ENCODE measurements at regions of chr2 and their contacts with region 1.

Region 1: DNA sequence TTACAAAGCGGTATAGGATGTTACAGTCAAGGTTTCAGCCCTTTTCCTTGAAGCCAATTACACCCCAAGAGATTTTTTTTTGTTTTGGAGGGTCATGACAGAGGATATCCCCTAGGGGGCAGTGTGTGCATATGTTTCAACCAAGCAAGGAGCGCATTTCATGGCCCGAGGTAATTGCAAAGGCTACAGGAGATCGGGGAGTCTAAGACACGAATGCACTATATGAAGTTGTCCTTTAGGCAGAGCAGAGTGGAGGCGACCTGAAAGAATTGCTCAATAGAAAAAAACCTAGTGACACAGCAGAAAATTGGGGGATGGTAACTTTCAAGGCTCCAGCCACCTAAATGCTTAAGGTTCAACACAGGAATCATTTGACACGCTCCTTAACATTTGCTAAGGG is 219.8 kb upstream of the PARD3B start:
- DNase-seq: peak; percentile 74
- H3K4me3 Mint-ChIP-seq: no peak overlapping the region
- H3K27ac Mint-ChIP-seq: no peak overlapping the region
- H3K4me1 Mint-ChIP-seq: no peaks in the 10 kb centered on the region
- H3K27me3 Mint-ChIP-seq: no peaks in the 10 kb centered on the region

Region 2: DNA sequence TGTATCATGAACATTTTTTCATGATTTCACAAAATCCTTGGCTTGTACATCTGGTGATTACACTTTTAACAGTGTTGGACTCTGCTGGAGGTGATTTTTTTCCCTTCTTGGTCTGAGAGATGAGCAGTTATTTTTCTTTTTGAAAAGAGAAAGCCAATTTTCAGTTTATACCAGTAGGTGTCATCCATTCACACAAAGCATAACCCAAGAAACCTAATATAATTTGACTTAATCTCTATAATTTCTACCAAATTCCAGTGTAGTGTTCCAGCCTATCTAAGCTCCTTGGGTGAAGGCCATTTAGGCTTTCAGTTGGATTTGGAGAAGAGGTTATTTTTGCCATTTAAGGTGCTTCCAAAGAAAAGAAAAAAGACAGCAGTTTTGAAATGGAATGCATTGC is 396.6 kb before region 1 on chr2:
- CTCF ChIA-PET with region 1: no interaction called
- intact Hi-C with region 1: loop called (anchors 5 kb)
- DNase-seq: no peak
- H3K4me3 Mint-ChIP-seq: no peak overlapping the region
- H3K27ac Mint-ChIP-seq: no peak overlapping the region
- H3K4me1 Mint-ChIP-seq: peaks cover 43% of the 10 kb centered on the region
- H3K27me3 Mint-ChIP-seq: no peaks in the 10 kb centered on the region

Region 3: GRCh38 chr2:204018717-204019116 is 306.8 kb before region 1 on chr2:
- CTCF ChIA-PET with region 1: no interaction called
- intact Hi-C with region 1: no loop called
- DNase-seq: no peak
- H3K4me3 Mint-ChIP-seq: no peak overlapping the region
- H3K27ac Mint-ChIP-seq: peak overlapping the region; percentile 70
- H3K4me1 Mint-ChIP-seq: peaks cover 65% of the 10 kb centered on the region
- H3K27me3 Mint-ChIP-seq: no peaks in the 10 kb centered on the region

Region 4: GRCh38 chr2:204081487-204082425 is 243.7 kb before region 1 on chr2:
- CTCF ChIA-PET with region 1: no interaction called
- intact Hi-C with region 1: no loop called
- DNase-seq: no peak
- H3K4me3 Mint-ChIP-seq: no peak overlapping the region
- H3K27ac Mint-ChIP-seq: no peak overlapping the region
- H3K4me1 Mint-ChIP-seq: peaks cover 5% of the 10 kb centered on the region
- H3K27me3 Mint-ChIP-seq: no peaks in the 10 kb centered on the region

Region 5: DNA sequence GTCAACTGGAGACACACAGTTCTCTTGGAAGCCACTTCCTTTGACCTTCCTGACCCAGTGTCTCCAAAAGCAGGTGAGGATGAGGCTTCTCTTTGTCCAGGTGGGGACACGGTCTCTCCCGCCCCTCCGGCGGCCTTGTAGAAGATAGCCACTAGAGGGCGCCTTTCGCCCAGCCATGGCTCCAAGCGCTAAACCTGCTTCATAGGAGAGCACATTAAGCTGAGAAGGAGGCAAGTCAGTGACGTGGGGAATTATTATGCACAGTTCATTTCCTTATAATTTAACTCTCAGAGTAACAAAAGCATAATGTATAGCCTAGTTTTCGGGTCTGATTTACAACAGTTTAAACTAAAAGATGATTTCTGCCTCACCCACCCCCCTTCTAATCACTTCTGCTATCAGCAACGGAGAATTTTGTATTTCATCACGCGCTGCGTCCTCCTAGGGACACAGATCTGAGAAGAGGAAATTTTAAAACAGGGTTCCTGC is 180.2 kb before region 1 on chr2:
- CTCF ChIA-PET with region 1: no interaction called
- intact Hi-C with region 1: loop called (anchors 1 kb)
- DNase-seq: peak; percentile 90
- H3K4me3 Mint-ChIP-seq: peak overlapping the region; percentile 65
- H3K27ac Mint-ChIP-seq: peak overlapping the region; percentile 22
- H3K4me1 Mint-ChIP-seq: peaks cover 9% of the 10 kb centered on the region
- H3K27me3 Mint-ChIP-seq: peaks cover 5% of the 10 kb centered on the region

Region 6: GRCh38 chr2:204468746-204469429 is 143.4 kb after region 1 on chr2:
- CTCF ChIA-PET with region 1: no interaction called
- intact Hi-C with region 1: no loop called
- DNase-seq: no peak
- H3K4me3 Mint-ChIP-seq: no peak overlapping the region
- H3K27ac Mint-ChIP-seq: no peak overlapping the region
- H3K4me1 Mint-ChIP-seq: no peaks in the 10 kb centered on the region
- H3K27me3 Mint-ChIP-seq: peaks cover 22% of the 10 kb centered on the region

Region 7: DNA sequence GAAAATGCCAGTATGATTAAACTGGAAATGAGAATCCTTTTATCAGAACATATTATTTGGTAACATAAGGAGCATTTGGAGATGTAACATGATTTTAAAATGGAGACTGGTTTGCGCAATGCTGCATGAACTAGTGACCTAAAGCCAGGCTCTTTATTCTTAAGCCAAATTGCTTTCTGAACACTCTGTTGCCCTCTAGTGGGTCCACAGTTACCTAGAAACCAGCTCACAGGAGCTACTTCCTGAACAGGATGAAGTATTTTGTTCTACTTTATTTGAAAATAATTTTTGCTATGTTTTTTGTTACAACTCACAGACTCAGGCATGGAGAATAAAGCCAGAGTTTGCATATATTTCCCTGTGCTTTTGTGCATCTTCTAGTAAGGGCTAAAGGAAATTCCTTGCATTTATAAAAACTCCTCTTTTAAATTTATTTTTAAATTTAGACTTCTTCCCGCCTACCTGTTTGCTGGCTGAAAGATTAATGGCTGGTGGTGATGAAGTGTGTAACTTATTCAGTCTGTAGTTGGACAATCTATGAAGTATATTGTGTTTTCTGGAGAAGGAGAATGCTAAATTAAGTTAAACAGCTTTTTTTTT is 366.5 kb after region 1 on chr2:
- CTCF ChIA-PET with region 1: interaction called, 12 read pairs
- intact Hi-C with region 1: loop called (anchors 1 kb)
- DNase-seq: peak; percentile 63
- H3K4me3 Mint-ChIP-seq: no peak overlapping the region
- H3K27ac Mint-ChIP-seq: no peak overlapping the region
- H3K4me1 Mint-ChIP-seq: peaks cover 7% of the 10 kb centered on the region
- H3K27me3 Mint-ChIP-seq: no peaks in the 10 kb centered on the region

Region 8: DNA sequence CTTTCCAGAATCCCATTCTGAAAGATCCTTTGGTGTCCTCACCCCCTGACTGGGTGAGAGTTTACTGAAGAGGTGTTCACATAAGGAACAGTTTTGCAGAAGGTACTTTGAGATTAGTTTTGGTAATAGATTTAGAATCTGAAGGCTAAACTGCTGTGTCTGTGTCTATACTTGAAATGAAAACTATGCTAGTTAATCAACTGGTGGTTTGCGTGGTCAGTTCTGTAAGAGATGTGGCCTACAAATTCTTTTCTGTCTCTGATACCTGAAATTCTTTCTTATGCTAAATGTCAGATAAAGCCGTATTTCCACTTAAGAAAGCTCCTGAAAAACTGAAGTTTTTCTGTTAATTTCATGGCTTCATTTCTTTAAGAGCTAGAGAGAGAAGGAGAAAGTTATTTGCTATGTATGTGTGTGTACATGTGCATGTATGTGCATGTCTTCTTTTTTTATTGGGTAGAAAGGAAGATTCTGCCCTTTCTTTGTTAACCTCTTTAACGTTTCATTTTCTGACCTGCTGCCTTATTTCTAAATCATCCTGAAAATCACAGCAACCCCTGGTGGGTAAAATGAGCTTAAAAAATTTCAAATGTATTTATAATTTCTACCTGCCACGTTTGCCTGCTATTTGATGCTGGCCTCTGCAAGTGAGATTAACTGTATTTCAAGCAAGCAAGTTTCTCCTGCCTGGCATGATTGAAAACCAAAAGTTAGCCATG is 804.8 kb after region 1 on chr2:
- CTCF ChIA-PET with region 1: no interaction called
- intact Hi-C with region 1: loop called (anchors 1 kb)
- DNase-seq: no peak
- H3K4me3 Mint-ChIP-seq: no peak overlapping the region
- H3K27ac Mint-ChIP-seq: no peak overlapping the region
- H3K4me1 Mint-ChIP-seq: peaks cover 18% of the 10 kb centered on the region
- H3K27me3 Mint-ChIP-seq: no peaks in the 10 kb centered on the region

Region 9: DNA sequence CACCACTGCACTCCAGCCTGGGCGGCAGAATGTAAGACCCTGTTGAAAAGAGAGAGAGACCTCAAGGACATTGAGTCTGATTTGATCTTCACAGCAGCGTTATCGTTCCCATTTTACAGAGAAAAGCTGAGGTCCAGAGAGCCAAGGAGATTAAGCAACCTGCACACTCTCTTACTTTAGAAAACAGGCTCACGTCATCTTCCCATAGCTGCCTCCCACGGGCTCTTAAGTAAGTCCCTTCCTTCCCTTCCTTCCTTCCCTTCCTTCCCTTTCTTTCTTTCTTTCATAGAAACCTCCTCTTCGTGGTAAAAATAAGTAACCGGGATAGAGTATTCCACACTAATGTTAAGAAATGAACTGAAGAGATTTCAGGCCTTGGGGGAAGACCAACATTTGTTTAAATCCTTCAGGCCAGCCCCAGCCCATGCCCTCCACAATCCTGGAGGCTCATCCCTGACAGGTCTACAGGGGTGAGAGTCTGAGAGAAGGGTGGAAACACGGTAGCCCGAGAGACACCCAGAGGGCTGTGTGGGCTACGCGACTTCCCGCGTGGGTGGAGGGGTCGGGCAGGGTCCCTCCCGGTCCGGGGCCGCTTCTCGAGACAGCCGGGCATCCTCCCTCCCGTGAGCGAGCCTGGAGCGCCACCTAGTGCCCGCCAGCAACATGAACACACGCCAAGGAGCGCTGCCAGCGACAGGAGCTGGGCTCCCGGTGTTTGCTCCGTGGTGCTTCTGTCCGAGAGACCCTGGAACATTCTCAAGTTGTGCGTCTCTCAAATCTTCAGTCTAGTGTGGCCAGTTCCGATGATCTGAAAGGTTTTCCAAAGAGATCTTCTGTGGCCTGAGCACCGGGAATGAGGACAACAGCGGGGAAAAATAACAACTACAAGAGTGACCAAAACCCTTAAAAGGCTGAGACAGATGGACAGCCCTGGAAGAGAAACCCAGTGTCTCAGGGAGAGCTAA is 1600.2 kb after region 1 on chr2:
- CTCF ChIA-PET with region 1: interaction called, 3 read pairs
- intact Hi-C with region 1: loop called (anchors 1 kb)
- DNase-seq: peak; percentile 80
- H3K4me3 Mint-ChIP-seq: peak overlapping the region; percentile 8
- H3K27ac Mint-ChIP-seq: no peak overlapping the region
- H3K4me1 Mint-ChIP-seq: peaks cover 8% of the 10 kb centered on the region
- H3K27me3 Mint-ChIP-seq: peaks cover 39% of the 10 kb centered on the region